Colonic mucosa (tissue), 4 donors: ENCODE measurements at regions of chr5 and their contacts with region 1.

Region 1: GRCh38 chr5:154686490-154686889 is 68.7 kb upstream of the LARP1 start:
- DNase-seq: no peak
- H3K4me3 ChIP-seq: no peak overlapping the region
- H3K27ac ChIP-seq: no peak overlapping the region
- H3K4me1 ChIP-seq: no peaks in the 10 kb centered on the region
- H3K27me3 ChIP-seq: no peaks in the 10 kb centered on the region
- CTCF ChIP-seq: no peak

Region 2: GRCh38 chr5:154513669-154514084 is 172.8 kb before region 1 on chr5:
- intact Hi-C with region 1: no loop called
- DNase-seq: no peak
- H3K4me3 ChIP-seq: no peak overlapping the region
- H3K27ac ChIP-seq: no peak overlapping the region
- H3K4me1 ChIP-seq: no peaks in the 10 kb centered on the region
- H3K27me3 ChIP-seq: no peaks in the 10 kb centered on the region
- CTCF ChIP-seq: no peak

Region 3: GRCh38 chr5:154754460-154755360 is 68.2 kb after region 1 on chr5:
- intact Hi-C with region 1: loop called (anchors 5 kb)
- DNase-seq: peak; percentile 100
- H3K4me3 ChIP-seq: peak overlapping the region; percentile 95
- H3K27ac ChIP-seq: peak overlapping the region; percentile 94
- H3K4me1 ChIP-seq: peaks cover 3% of the 10 kb centered on the region
- H3K27me3 ChIP-seq: no peaks in the 10 kb centered on the region
- CTCF ChIP-seq: no peak